Activated CD8-positive, alpha-beta T cell treated with anti-CD3 and anti-CD28 coated beads for 36 hours (primary cell): ENCODE measurements at regions of chr7 and their contacts with region 1.

Region 1: DNA sequence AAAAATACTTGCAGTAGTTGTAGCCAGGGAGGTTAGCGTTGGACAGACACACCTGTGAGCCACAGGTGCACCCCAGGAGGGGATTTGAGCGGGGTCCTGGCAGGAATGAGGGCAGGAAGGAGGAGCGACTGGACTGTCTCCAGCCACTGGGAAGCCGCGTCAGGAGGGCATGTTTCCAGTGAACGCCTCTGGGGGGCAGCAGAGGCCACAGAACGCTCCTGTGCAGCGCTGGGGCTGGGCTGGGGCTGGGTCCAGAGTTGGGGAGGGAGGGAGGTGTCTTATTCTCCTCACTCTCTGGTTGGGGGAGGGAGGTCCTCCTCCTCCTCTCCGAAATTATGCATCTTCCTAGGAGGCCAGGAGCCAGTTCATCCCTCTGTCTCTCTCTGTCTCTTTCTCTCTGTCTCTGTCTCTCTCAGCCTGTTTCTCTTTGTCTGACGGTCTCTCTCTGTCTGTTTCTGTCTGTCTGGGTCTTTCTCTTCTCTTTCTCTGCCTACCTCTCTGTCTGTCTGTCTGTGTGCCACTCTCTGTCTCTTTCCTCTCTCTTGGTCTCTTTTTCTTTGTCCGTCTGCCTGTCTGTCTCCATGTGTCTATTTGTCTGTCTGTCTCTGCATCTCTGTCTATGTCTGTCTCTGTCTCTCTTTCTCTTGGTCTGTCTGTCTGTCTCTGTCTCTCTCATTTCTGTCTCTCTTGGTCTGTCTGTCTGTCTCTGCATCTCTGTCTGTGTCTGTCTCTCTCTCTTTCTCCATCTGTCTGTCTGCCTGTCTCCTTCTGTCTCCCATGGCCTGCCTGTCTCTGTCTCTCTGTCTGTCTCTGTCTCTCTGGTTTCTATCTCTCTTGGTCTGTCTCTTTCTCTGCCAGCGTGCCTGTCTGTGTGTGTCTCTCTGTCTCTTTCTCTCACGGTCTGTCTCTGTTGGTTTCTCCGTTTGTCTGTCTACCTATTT is 9.9 kb upstream of the PSMG3 start:
- DNase-seq: peak; percentile 81
- ATAC-seq: peak; percentile 100
- H3K4me3 Mint-ChIP-seq: no peak overlapping the region
- H3K27ac Mint-ChIP-seq: no peak overlapping the region
- H3K4me1 Mint-ChIP-seq: peaks cover 8% of the 10 kb centered on the region
- H3K27me3 Mint-ChIP-seq: no peaks in the 10 kb centered on the region
- CTCF ChIP-seq: peak; percentile 89

Region 2: DNA sequence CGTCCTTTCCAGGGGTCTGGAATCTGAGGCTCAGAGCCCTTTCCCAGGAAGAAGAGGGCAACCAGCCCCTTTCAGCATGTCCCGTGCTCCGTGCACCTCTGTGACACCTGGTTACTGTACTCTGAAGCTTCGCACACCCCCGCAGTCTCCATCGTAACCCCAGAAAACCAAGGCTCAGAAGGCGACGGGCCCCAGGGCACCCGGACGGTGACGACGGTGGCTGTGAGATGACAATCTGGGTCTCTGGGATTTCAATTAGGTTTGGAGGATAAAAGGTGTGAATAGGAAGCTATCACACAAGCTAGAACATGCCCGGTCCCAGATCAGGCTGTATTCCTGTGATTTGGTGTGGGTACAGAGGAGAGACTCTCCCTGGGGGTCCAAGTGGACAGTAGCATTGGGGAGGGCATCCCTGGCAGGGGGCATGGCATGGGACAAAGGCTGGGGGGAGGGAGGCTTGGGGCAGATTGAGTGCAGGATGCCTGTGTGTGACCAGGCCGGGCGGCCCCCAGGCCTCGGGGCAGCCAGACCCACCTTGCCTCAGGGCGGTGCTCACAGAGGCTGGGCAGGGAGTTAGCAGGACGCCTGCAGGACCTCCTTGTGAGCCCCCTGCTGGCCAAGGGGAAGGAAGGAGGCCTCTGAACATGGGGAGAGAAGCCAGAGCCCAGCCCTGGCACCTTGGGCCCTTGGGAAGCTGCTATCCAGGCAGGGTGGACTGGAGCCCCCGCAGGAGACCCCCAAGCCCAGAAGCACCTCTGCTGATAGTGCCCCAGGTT is 13.5 kb after region 1 on chr7:
- CTCF ChIA-PET with region 1: interaction called, 10 read pairs
- POLR2A ChIA-PET with region 1: interaction called, 3 read pairs
- intact Hi-C with region 1: no loop called
- DNase-seq: peak; percentile 54
- ATAC-seq: peak; percentile 48
- H3K4me3 Mint-ChIP-seq: peak overlapping the region; percentile 4
- H3K27ac Mint-ChIP-seq: no peak overlapping the region
- H3K4me1 Mint-ChIP-seq: peaks cover 26% of the 10 kb centered on the region
- H3K27me3 Mint-ChIP-seq: peaks cover 30% of the 10 kb centered on the region
- CTCF ChIP-seq: peak; percentile 43

Region 3: DNA sequence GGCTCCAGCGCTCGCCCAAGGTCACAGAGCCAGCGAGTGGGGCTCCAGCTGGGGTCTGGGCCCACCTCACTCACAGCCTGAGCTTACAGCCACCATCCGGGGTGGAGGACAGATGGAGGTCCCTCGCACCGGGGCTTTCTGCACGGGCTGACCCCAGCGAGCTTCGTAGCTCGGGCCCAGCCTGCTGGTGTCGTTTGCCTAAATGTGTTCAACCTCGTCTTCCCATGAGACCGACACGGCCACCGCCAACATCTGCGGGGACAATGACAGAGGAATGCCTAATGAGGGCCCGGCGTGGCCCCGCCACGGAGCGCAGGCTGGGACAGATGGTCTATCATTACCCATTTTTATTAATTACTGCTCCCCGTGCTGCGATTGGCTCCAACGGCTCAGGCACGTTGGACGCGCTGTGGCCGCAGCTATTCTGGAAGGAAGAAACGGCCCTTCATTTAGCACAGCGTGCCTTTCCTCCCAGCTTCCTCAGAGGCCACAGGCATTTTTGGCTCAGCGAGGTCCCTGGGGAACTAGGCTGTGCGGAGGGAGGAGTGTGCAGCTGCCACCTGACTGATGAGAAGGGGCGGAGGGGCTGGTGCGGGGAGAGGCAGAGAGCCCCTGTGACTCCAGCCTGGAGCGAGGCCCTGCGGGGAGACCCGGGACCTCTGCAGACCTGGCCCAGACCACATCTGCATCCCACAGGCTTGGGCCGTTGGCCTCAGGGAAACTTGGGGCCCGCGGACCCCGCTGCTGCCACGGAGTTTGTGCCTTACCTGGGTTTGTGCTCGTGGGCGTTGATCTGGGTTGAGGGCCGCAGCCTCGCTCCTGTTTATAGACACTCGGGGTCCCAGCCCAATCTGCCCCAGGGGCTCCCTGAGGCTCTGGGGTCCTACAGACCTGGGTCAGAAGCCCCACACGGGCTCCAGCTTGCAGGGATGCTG is 67.5 kb after region 1 on chr7:
- CTCF ChIA-PET with region 1: no interaction called
- POLR2A ChIA-PET with region 1: no interaction called
- intact Hi-C with region 1: no loop called
- DNase-seq: no peak
- ATAC-seq: no peak
- H3K4me3 Mint-ChIP-seq: no peak overlapping the region
- H3K27ac Mint-ChIP-seq: no peak overlapping the region
- H3K4me1 Mint-ChIP-seq: no peaks in the 10 kb centered on the region
- H3K27me3 Mint-ChIP-seq: peaks cover 7% of the 10 kb centered on the region
- CTCF ChIP-seq: no peak

Region 4: DNA sequence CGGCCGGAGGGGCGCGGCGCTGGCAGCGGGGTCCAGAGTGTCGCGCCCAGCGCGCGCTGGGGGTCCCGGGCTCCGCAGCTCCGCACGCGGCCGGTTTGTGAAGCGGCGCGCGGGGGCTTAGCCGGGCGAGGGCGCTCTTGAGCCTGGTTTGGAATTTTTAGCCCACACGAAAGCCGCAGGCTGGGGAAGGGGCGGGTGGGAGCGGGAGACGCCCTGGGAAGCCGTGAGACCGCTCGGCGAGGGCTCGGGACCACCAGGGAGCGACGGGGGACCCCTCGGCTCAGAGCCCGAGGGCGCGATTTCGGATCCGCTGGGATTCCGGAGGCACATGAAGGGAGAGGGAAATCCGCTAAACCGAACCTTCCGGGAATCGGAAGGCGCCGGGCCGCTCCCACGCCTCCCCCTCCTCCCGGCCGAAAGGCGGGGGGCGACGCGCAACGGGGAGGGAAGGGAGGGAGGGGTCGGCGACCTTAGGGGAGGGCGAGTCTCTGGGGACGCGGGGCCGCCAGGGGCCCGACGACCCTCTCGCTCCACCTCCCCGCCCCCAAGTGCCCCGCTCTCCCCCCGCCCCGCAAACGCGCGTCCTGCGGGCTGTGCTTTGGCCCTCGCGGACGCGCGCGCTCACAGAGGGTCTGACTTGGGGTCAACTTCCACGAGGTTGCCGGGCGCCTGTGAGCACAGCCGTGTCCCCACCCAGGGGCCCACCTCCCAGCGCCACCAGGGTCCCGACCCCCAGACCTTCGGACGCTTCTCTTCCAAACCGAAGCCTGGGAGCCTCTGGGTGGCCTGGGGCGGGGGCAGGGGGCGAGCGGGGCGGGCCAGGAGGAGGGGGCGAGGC is 85.2 kb after region 1 on chr7:
- CTCF ChIA-PET with region 1: no interaction called
- POLR2A ChIA-PET with region 1: no interaction called
- intact Hi-C with region 1: no loop called
- DNase-seq: peak; percentile 66
- ATAC-seq: peak; percentile 50
- H3K4me3 Mint-ChIP-seq: no peak overlapping the region
- H3K27ac Mint-ChIP-seq: no peak overlapping the region
- H3K4me1 Mint-ChIP-seq: peaks cover 5% of the 10 kb centered on the region
- H3K27me3 Mint-ChIP-seq: peaks cover 41% of the 10 kb centered on the region
- CTCF ChIP-seq: peak; percentile 75